ENCODE measurements at regions of chr2 and their contacts with region 1.

Region 1: GRCh38 chr2:25376750-25377621 is 35.3 kb upstream of the DNMT3A start:
- DNase-seq: peak; percentile 92
- H3K4me3 Mint-ChIP-seq: peak overlapping the region; percentile 72
- H3K27ac Mint-ChIP-seq: peak overlapping the region; percentile 94
- H3K4me1 Mint-ChIP-seq: peaks cover 51% of the 10 kb centered on the region
- H3K27me3 Mint-ChIP-seq: no peaks in the 10 kb centered on the region

Region 2: GRCh38 chr2:25301453-25302352 is 75.3 kb before region 1 on chr2:
- intact Hi-C with region 1: loop called (anchors 2 kb)
- DNase-seq: peak; percentile 76
- H3K4me3 Mint-ChIP-seq: peak overlapping the region; percentile 53
- H3K27ac Mint-ChIP-seq: peak overlapping the region; percentile 40
- H3K4me1 Mint-ChIP-seq: peaks cover 40% of the 10 kb centered on the region
- H3K27me3 Mint-ChIP-seq: no peaks in the 10 kb centered on the region

Region 3: GRCh38 chr2:25314514-25315315 is 62.3 kb before region 1 on chr2:
- intact Hi-C with region 1: loop called (anchors 1 kb)
- DNase-seq: peak; percentile 80
- H3K4me3 Mint-ChIP-seq: peak overlapping the region; percentile 83
- H3K27ac Mint-ChIP-seq: peak overlapping the region; percentile 97
- H3K4me1 Mint-ChIP-seq: peaks cover 56% of the 10 kb centered on the region
- H3K27me3 Mint-ChIP-seq: no peaks in the 10 kb centered on the region

Region 4: GRCh38 chr2:25362049-25362433 is 14.9 kb before region 1 on chr2:
- intact Hi-C with region 1: loop called (anchors 1 kb)
- DNase-seq: peak; percentile 93
- H3K4me3 Mint-ChIP-seq: peak overlapping the region; percentile 84
- H3K27ac Mint-ChIP-seq: peak overlapping the region; percentile 94
- H3K4me1 Mint-ChIP-seq: peaks cover 26% of the 10 kb centered on the region
- H3K27me3 Mint-ChIP-seq: peaks cover 2% of the 10 kb centered on the region

Region 5: DNA sequence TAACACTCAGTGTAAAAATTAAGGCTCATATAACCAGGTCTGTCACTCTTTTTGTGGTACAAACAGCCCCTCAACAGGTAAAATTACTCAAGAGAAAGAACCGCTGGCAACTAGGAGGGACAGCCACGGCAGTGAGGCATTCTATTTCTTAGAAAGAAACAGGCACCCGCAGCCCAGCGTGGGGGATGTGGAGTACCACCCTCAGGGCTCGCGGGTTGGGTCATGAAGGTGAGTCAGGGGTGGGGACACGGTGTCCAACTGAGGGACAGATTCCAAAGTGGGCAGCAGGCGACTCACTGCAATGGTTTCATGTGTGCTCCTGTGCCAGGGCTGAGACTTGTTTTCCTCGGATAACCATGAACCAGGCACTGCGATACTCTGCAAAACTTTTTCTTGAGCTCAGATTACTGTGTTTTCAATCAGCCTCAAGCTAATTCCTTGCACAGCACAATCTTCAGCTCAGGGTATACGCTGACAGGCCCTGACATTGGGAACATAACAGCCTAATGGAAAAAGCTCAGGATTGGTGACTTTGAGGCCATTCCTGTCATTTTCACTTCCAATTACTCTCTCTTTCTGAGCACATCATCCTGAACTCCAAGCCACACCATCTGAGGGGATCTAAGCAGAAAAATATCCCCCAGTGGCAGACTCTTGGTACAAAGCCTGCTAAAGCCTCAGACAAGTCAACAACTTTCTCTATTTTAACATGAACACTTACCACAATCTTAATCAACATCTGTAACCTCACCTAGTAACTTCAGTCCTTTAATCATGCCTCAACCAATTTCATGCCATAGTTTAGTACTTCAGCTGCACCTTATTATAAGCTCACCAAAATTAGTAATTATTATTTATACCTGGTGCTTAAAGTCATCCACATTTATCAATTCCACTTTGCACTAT is 167.2 kb after region 1 on chr2:
- intact Hi-C with region 1: no loop called
- DNase-seq: no peak
- H3K4me3 Mint-ChIP-seq: no peak overlapping the region
- H3K27ac Mint-ChIP-seq: no peak overlapping the region
- H3K4me1 Mint-ChIP-seq: peaks cover 18% of the 10 kb centered on the region
- H3K27me3 Mint-ChIP-seq: peaks cover 2% of the 10 kb centered on the region

Region 6: GRCh38 chr2:25558262-25558661 is 181.3 kb after region 1 on chr2:
- intact Hi-C with region 1: loop called (anchors 1 kb)
- DNase-seq: peak; percentile 53
- H3K4me3 Mint-ChIP-seq: peak overlapping the region; percentile 46
- H3K27ac Mint-ChIP-seq: peak overlapping the region; percentile 98
- H3K4me1 Mint-ChIP-seq: peaks cover 63% of the 10 kb centered on the region
- H3K27me3 Mint-ChIP-seq: no peaks in the 10 kb centered on the region